AG04449 (cell line): ENCODE measurements at regions of chr14 and their contacts with region 1.

Region 1: GRCh38 chr14:69247676-69248440 is 12.1 kb upstream of the GALNT16 start:
- DNase-seq: peak; percentile 80
- H3K4me3 ChIP-seq: no peak overlapping the region
- CTCF ChIP-seq: no peak

Region 2: GRCh38 chr14:69259527-69260189 is 11.8 kb after region 1 on chr14 and contains the start of gene GALNT16:
- CTCF ChIA-PET with region 1: interaction called, 45 read pairs
- POLR2A ChIA-PET with region 1: no interaction called
- DNase-seq: no peak
- H3K4me3 ChIP-seq: peak within 1 kb of the TSS; percentile 63
- CTCF ChIP-seq: peak; percentile 35

Region 3: DNA sequence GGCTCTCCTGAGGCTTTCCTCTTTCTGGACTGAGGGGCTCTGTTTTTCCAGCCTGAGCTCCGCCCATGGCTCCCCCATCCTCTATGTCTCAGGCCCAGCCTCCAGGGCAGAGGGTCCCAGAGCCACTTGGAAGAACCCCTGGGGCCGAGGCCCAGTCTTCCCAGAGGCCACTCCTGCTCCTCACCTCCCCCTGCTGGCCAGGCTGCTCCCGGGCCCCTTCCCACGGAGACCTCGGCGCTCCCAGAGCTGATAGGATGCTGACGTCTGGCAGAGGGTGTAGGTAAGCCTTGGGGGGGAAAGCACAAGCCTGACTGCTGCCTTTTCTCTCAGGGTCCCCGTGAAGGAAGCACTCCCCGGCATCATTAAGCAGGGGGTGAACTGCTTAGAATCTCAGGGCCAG is 98.9 kb after region 1 on chr14:
- CTCF ChIA-PET with region 1: interaction called, 86 read pairs
- POLR2A ChIA-PET with region 1: no interaction called
- DNase-seq: no peak
- H3K4me3 ChIP-seq: no peak overlapping the region
- CTCF ChIP-seq: peak; percentile 93

Region 4: GRCh38 chr14:69363055-69363454 is 115.2 kb after region 1 on chr14:
- CTCF ChIA-PET with region 1: interaction called, 156 read pairs
- POLR2A ChIA-PET with region 1: no interaction called
- DNase-seq: no peak
- H3K4me3 ChIP-seq: no peak overlapping the region
- CTCF ChIP-seq: peak; percentile 84

Region 5: GRCh38 chr14:69460093-69460701 is 212.3 kb after region 1 on chr14:
- CTCF ChIA-PET with region 1: interaction called, 113 read pairs
- POLR2A ChIA-PET with region 1: interaction called, 3 read pairs
- DNase-seq: peak; percentile 44
- H3K4me3 ChIP-seq: no peak overlapping the region
- CTCF ChIP-seq: peak; percentile 71